Body of pancreas (tissue), 4 donors: ENCODE measurements at regions of chr1 and their contacts with region 1.

Region 1: DNA sequence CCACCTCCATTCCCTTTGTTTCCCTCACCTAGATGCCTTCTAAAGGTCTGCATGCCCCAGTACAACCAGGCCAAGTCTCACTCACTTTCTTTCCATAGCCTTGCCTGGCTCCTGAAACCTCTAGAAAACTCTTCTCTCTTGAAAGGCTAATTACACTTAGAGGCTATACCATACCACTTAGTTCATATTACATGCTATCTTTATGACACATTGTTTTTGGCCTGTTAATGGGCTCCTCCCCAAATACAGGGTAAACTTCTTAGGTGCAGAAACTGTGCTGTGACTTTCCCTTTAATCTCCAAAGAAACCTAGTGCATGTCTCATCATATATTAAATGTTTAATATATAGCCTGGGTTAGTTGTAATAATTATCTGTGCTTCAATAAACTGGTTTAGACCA is 56.6 kb upstream of the C1orf105 start:
- DNase-seq: no peak
- ATAC-seq: no peak
- H3K4me3 ChIP-seq: no peak overlapping the region
- H3K27ac ChIP-seq: no peak overlapping the region
- H3K4me1 ChIP-seq: peaks cover 22% of the 10 kb centered on the region
- H3K27me3 ChIP-seq: no peaks in the 10 kb centered on the region
- CTCF ChIP-seq: no peak
- POLR2A ChIP-seq: no peak

Region 2: GRCh38 chr1:172293429-172293828 is 70.4 kb before region 1 on chr1:
- intact Hi-C with region 1: loop called (anchors 2 kb)
- DNase-seq: no peak
- ATAC-seq: no peak
- H3K4me3 ChIP-seq: no peak overlapping the region
- H3K27ac ChIP-seq: no peak overlapping the region
- H3K4me1 ChIP-seq: no peaks in the 10 kb centered on the region
- H3K27me3 ChIP-seq: no peaks in the 10 kb centered on the region
- CTCF ChIP-seq: no peak
- POLR2A ChIP-seq: no peak